HEK293 (cell line): ENCODE measurements at regions of chr2 and their contacts with region 1.

Region 1: GRCh38 chr2:60756191-60757041 is at the start of gene PAPOLG:
- H3K4me3 ChIP-seq: peak within 1 kb of the TSS; percentile 93
- H3K27ac ChIP-seq: peak within 1 kb of the TSS; percentile 93
- H3K4me1 ChIP-seq: peaks cover 7% of the 10 kb centered on the region
- CTCF ChIP-seq: no peak

Region 2: DNA sequence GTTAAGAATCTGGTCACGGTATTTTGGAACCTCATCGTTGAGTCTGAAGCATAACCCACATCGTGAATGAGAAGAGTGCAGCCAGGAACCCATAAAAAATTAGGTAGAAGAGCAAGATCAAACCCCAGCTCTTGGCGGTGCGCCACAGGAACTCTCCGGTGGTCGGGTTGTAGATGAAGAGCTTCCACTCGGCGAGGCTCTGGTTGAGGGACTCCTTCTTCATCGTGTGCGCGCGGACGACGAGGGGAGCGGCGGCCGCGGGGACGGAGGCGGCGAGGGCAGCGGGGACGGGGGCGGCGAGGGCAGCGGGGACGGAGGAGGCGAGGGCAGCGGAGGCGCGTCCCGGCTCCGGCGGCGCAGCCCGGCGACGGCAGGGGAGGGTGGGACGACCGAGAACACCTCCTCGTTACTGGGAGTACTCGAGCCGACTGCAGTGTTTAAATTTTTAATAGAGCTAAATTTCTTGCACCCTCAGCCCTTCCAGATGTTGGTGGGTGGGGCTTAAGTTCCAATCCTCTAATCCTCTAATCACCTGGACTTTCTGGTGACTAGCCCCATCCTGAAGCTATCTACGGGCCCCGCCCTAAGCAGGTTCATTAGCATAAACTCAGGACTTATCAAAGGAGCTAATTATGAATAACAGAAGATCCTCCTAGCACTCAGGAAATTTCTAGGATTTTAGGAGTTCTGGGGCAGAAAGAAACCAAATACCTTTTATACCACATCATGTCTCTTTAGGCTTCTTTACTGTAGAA is 20.7 kb before region 1 on chr2:
- CTCF ChIA-PET with region 1: no interaction called
- POLR2A ChIA-PET with region 1: interaction called, 13 read pairs
- H3K4me3 ChIP-seq: peak overlapping the region; percentile 44
- H3K27ac ChIP-seq: no peak overlapping the region
- H3K4me1 ChIP-seq: no peaks in the 10 kb centered on the region
- CTCF ChIP-seq: no peak

Region 3: GRCh38 chr2:60745761-60746160 is 10.7 kb before region 1 on chr2:
- CTCF ChIA-PET with region 1: no interaction called
- POLR2A ChIA-PET with region 1: interaction called, 13 read pairs
- H3K4me3 ChIP-seq: no peak overlapping the region
- H3K27ac ChIP-seq: no peak overlapping the region
- H3K4me1 ChIP-seq: no peaks in the 10 kb centered on the region
- CTCF ChIP-seq: no peak

Region 4: GRCh38 chr2:61016808-61017555 is 260.6 kb after region 1 on chr2:
- CTCF ChIA-PET with region 1: no interaction called
- POLR2A ChIA-PET with region 1: interaction called, 12 read pairs
- H3K4me3 ChIP-seq: peak overlapping the region; percentile 84
- H3K27ac ChIP-seq: peak overlapping the region; percentile 82
- H3K4me1 ChIP-seq: peaks cover 5% of the 10 kb centered on the region
- CTCF ChIP-seq: peak; percentile 24; the same call in 1 of the 2 replicates